ENCODE measurements at regions of chr11 and their contacts with region 1.

Region 1: GRCh38 chr11:4375431-4376140 is 7.4 kb upstream of the OR52B4 start:
- DNase-seq: no peak
- H3K4me3 ChIP-seq: no peak overlapping the region
- H3K4me3 Mint-ChIP-seq: no peak overlapping the region
- H3K27ac Mint-ChIP-seq: no peak overlapping the region
- H3K4me1 ChIP-seq: no peaks in the 10 kb centered on the region
- H3K4me1 Mint-ChIP-seq: no peaks in the 10 kb centered on the region
- H3K27me3 ChIP-seq: no peaks in the 10 kb centered on the region; the same call in 1 of the 2 replicates
- H3K27me3 Mint-ChIP-seq: no peaks in the 10 kb centered on the region
- CTCF ChIP-seq: no peak

Region 2: GRCh38 chr11:4393209-4393857 is 17.7 kb after region 1 on chr11 and contains the start of gene TRIM21:
- CTCF ChIA-PET with region 1: no interaction called
- POLR2A ChIA-PET with region 1: no interaction called
- intact Hi-C with region 1: loop called (anchors 2 kb)
- DNase-seq: peak; percentile 82 to 85
- H3K4me3 ChIP-seq: peak within 1 kb of the TSS; percentile 83
- H3K4me3 Mint-ChIP-seq: peak within 1 kb of the TSS; percentile 88
- H3K27ac Mint-ChIP-seq: peak within 1 kb of the TSS; percentile 52
- H3K4me1 ChIP-seq: no peaks in the 10 kb centered on the region
- H3K4me1 Mint-ChIP-seq: peaks cover 7% of the 10 kb centered on the region
- H3K27me3 ChIP-seq: no peaks in the 10 kb centered on the region
- H3K27me3 Mint-ChIP-seq: peaks cover 3% of the 10 kb centered on the region
- CTCF ChIP-seq: no peak
- total RNA-seq, gene TRIM21: 5.4 and 6.1 TPM in 2 replicates